Right ventricle myocardium inferior (tissue), 1 donor: ENCODE measurements at regions of chr5 and their contacts with region 1.

Region 1: GRCh38 chr5:73448463-73449136 is at the start of gene FOXD1:
- DNase-seq: no peak
- ATAC-seq: peak; percentile 84
- total RNA-seq, gene FOXD1: not detected

Region 2: DNA sequence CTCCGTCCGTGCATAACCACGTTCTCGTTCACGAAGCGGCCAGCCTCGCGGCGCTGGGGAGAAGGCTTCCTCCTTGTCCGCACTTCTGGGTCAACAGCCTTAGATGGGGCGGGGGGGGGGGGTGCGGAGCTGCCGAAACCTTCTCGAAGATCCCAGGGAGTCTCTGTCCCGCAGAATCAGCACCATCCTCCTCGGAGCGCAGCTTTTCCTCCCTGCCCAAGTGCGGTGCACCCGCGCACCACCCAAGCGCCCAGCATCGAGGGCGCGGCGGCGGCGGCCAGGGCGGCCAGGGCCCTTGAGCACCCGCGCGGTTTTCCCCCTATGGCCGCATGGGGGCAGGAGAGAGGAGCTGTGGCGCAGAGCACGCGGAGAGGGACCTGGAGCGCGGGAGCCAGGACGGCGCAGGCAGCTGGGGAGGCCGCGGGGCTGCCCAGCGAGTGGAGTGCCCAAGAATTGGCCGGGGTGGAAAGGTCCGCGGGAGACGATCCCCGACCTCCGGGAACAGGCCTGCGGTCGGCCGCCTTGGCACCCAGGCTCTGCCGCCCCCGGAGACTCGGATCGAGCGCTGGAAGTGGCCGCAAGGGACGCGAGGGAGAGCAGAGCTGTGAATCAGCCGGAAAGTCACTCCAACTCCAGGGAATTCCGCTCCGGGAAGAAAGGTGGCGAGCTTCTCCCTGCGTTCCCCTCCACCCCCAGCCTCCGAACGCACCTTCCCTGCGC is 232.5 kb before region 1 on chr5:
- intact Hi-C with region 1: loop called (anchors 2 kb)
- DNase-seq: peak; percentile 80
- ATAC-seq: peak; percentile 96

Region 3: DNA sequence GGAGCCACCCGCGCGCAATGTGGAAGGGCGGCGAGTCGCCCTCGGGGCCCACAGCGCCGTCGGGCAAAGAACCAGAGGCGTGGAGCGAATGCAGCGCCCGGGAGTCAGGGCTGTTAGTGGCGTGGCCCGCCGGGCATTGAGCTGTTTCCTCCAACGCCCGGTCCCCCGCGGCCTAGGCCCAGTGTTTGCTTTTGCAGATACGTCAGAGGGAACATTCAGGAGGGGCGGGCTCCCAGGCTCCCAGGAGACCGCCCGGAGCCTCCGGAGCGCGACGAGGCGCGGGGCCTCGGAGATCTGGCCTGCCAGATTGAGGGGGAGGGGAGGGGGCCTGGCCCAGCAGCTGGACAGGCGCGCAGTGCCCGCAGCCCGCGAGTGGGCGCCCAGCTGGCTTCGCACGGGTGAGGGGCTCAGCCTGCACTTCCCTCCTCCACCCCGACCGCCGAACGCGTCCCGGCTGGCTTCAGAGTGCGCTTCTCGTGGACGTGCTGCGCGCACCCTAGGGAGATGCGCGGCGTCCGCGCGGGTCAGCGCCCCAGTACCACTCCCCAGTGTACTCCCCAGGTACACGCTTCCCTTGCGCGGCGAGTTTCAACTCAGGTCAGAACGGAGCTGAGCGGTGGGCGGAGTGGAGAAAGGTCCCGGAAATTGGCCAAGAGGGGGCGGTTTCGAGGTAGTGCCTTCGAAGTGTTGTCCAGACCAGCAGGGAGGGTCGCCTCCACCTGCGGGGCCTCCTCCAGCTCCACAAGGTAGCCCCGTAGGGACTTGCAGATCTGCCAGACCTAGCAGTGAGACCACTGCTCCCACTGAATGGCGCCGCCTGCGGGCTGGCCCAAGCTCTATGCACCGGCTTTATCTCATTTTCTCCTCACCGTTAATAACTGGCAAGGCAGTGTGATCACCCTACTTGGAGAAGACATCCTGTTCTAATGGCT is 145.2 kb before region 1 on chr5:
- intact Hi-C with region 1: loop called (anchors 10 kb)
- DNase-seq: no peak
- ATAC-seq: no peak